Activated naive CD4-positive, alpha-beta T cell treated with anti-CD3 and anti-CD28 coated beads for 36 hours (primary cell): ENCODE measurements at regions of chr14 and their contacts with region 1.

Region 1: DNA sequence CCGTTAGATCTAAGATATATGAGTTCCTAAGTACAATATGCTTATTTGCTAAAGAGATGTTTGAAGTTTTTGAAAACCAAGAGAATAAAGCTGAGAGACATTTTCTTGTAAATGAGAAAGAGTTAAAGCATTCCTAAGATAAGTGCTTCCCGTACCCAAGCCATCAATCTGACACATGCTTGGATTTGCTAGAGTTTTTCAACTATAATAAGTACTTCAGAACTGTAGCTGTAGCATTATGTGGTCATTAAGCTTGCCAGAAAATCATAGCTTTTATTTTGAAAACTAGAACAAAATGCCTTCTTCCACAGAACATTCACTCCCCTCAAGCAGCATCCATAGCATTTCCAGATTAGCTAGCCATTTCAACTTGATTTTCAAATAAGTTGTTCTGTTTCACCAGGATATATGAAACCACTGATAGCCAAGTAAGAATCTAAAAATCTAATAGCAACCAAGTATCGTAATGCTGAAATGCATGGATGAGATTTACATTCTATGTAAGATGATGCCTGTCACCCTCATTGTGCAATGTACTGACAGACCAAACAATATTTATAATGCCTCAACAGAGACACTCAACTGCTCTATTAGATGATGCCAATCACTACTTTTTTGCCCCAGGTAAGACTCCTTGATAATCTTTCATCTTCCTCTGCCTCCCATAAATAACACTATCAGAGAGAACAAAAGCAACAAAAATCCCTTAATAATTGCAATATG is 8.0 kb downstream of the SNW1 start:
- DNase-seq: no peak
- H3K4me3 Mint-ChIP-seq: no peak overlapping the region
- H3K27ac Mint-ChIP-seq: no peak overlapping the region
- H3K4me1 Mint-ChIP-seq: peaks cover 32% of the 10 kb centered on the region
- H3K27me3 Mint-ChIP-seq: no peaks in the 10 kb centered on the region

Region 2: GRCh38 chr14:77714926-77715325 is 38.0 kb before region 1 on chr14:
- CTCF ChIA-PET with region 1: interaction called, 4 read pairs
- intact Hi-C with region 1: loop called (anchors 5 kb)
- DNase-seq: peak; percentile 35
- H3K4me3 Mint-ChIP-seq: no peak overlapping the region
- H3K27ac Mint-ChIP-seq: peak overlapping the region; percentile 73
- H3K4me1 Mint-ChIP-seq: peaks cover 32% of the 10 kb centered on the region
- H3K27me3 Mint-ChIP-seq: no peaks in the 10 kb centered on the region